ENCODE measurements at regions of chr1 and their contacts with region 1.

Region 1: GRCh38 chr1:157948312-157949073 is 45.0 kb upstream of the KIRREL1 start:
- DNase-seq: peak; percentile 43
- ATAC-seq: peak; percentile 96
- H3K4me3 ChIP-seq: no peak overlapping the region
- H3K27ac ChIP-seq: no peak overlapping the region
- H3K4me1 ChIP-seq: no peaks in the 10 kb centered on the region
- H3K27me3 ChIP-seq: peaks cover 48% of the 10 kb centered on the region
- CTCF ChIP-seq: peak; percentile 60 to 69 (median 67); a peak in 5 of 6 replicates
- POLR2A ChIP-seq: no peak
- RAD21 ChIP-seq: peak; percentile 86

Region 2: DNA sequence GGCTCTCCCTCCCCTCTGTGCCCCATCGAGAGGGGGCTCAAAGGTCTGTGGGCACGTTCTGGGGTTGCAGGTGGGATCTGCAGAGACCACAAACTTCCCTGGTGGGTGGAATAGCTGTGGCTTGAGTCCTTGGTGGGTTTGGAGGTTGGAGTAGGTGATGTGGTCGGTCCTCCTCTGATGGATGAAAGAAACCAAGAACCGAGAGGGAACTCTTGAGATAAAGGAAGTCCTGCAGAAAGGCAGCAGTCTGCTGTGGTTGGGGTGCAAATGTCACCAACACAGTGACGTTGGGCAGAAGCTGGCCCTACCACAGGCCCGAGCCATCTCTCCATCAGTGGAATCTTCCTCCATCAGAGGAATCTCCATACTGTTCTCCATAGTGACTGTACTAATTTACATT is 568.0 kb before region 1 on chr1:
- CTCF ChIA-PET with region 1: no interaction called
- POLR2A ChIA-PET with region 1: no interaction called
- RAD21 ChIA-PET with region 1: no interaction called
- intact Hi-C with region 1: loop called (anchors 2 kb)
- DNase-seq: no peak
- ATAC-seq: no peak
- H3K4me3 ChIP-seq: no peak overlapping the region
- H3K27ac ChIP-seq: no peak overlapping the region
- H3K4me1 ChIP-seq: peaks cover 0 to 8% of the 10 kb centered on the region in 2 experiments; a peak in 2 of 4 replicates
- H3K27me3 ChIP-seq: peaks cover 42% of the 10 kb centered on the region
- CTCF ChIP-seq: no peak
- POLR2A ChIP-seq: no peak
- RAD21 ChIP-seq: no peak

Region 3: DNA sequence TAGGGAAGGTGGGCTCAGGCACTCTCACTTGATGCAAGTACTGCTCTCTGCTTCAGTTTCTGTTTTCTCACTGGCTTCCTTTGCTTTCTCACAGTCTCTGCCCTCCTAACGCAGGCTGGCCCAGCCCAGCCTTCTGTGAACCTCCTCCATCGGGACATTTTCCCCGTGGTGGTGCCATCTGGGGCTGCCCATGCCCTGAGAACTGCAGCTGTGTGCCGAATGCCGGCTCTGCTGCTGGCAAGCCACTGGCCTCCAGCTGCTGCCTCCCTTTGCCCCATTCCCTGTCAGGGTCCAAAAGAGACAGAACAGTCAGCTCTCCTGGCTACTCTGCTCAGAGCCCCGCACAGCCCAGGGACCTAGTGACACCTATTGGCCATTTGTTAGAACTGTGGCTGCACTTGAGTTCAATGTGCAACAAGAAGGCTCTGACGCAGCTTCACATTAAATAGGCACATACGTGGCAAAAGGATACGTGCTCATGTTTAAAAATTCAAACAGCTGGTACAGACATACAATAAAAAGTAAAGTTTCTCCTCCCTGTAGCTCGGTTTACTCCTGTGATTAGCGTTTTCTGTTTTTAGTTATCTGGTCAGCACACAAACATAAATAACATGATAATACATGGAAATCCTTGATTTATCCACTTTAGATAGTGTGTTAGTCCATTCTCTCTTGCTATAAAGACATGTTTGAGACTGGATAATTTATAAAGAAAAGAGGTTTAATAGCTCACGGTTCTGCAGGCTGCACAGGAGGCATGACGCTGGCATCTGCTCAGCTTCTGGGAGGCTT is 442.8 kb before region 1 on chr1:
- CTCF ChIA-PET with region 1: no interaction called
- POLR2A ChIA-PET with region 1: no interaction called
- RAD21 ChIA-PET with region 1: no interaction called
- intact Hi-C with region 1: loop called (anchors 10 kb)
- DNase-seq: peak; percentile 39
- ATAC-seq: peak; percentile 98
- H3K4me3 ChIP-seq: no peak overlapping the region
- H3K27ac ChIP-seq: no peak overlapping the region
- H3K4me1 ChIP-seq: no peaks in the 10 kb centered on the region
- H3K27me3 ChIP-seq: peaks cover 6% of the 10 kb centered on the region
- CTCF ChIP-seq: peak; percentile 63 to 86 (median 75)
- POLR2A ChIP-seq: no peak
- RAD21 ChIP-seq: peak; percentile 70

Region 4: GRCh38 chr1:157580179-157580827 is 368.2 kb before region 1 on chr1:
- CTCF ChIA-PET with region 1: interaction called, 5 read pairs
- POLR2A ChIA-PET with region 1: no interaction called
- RAD21 ChIA-PET with region 1: no interaction called
- intact Hi-C with region 1: loop called (anchors 5 kb)
- DNase-seq: peak; percentile 71
- ATAC-seq: peak; percentile 82
- H3K4me3 ChIP-seq: no peak overlapping the region
- H3K27ac ChIP-seq: no peak overlapping the region
- H3K4me1 ChIP-seq: no peaks in the 10 kb centered on the region
- H3K27me3 ChIP-seq: peaks cover 29% of the 10 kb centered on the region
- CTCF ChIP-seq: peak; percentile 49 to 78 (median 61); a peak in 5 of 6 replicates
- POLR2A ChIP-seq: no peak
- RAD21 ChIP-seq: peak; percentile 59

Region 5: GRCh38 chr1:157773493-157774350 is 174.8 kb before region 1 on chr1:
- CTCF ChIA-PET with region 1: no interaction called
- POLR2A ChIA-PET with region 1: no interaction called
- RAD21 ChIA-PET with region 1: no interaction called
- intact Hi-C with region 1: loop called (anchors 5 kb)
- DNase-seq: no peak
- ATAC-seq: peak; percentile 90
- H3K4me3 ChIP-seq: no peak overlapping the region
- H3K27ac ChIP-seq: no peak overlapping the region
- H3K4me1 ChIP-seq: no peaks in the 10 kb centered on the region
- H3K27me3 ChIP-seq: peaks cover 28% of the 10 kb centered on the region
- CTCF ChIP-seq: peak in 2 of 3 experiments; percentile 57; a peak in 5 of 6 replicates
- POLR2A ChIP-seq: no peak
- RAD21 ChIP-seq: peak; percentile 48

Region 6: DNA sequence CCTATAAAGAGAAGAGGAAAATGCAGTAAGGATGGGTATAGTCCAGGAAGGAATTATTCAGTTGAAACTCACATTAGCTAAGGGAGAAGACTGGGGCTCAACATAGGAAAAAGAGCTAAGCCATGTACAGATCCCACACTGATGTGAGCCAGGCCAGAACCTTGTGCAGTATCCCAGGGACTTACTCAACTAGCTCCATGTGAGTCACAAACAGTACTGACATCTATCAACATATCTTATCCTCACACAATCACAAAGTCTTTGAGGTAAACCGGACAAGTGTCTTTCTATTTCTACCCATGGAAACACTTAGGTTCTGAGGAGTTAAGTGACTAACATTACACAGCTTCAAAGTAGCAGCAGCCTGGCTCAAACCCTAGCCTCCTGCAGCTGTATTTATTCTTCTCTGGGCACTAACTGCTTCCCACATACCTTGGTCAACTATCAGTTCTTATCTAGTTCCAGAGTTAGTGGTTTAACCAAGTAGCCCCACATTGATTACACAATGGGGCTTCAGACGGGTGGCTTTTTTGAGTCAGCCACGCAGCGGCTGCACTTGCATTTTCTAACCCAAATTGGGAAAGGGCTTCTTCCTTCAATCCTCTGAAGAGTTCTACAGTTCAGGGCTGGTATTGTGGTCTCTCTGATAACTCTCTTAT is 116.4 kb before region 1 on chr1:
- CTCF ChIA-PET with region 1: no interaction called
- POLR2A ChIA-PET with region 1: no interaction called
- RAD21 ChIA-PET with region 1: no interaction called
- intact Hi-C with region 1: no loop called
- DNase-seq: no peak
- ATAC-seq: no peak
- H3K4me3 ChIP-seq: no peak overlapping the region
- H3K27ac ChIP-seq: no peak overlapping the region
- H3K4me1 ChIP-seq: no peaks in the 10 kb centered on the region
- H3K27me3 ChIP-seq: peaks cover 65% of the 10 kb centered on the region
- CTCF ChIP-seq: no peak
- POLR2A ChIP-seq: no peak
- RAD21 ChIP-seq: no peak

Region 7: DNA sequence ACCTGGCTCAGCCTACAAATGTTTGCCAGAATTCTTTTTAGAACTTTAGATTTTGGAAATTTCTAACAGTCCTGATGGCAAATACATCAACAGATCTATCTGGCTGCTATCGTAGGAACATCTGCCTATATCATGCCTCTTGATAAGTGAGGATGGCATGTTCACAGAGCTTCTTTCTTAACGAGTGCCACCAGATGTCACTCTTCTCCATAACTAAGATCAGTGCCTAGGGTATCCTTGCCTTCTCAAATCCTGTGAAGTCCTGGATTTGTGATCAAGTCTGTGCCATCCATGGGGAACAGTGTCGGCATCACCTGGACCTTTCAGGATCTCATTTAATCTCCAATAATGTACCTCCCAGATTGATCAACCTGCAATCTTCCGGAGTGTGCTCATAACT is 70.4 kb before region 1 on chr1:
- CTCF ChIA-PET with region 1: interaction called, 16 read pairs
- POLR2A ChIA-PET with region 1: no interaction called
- RAD21 ChIA-PET with region 1: interaction called, 3 to 5 read pairs
- intact Hi-C with region 1: loop called (anchors 1 kb)
- DNase-seq: peak; percentile 46
- ATAC-seq: peak; percentile 94
- H3K4me3 ChIP-seq: no peak overlapping the region
- H3K27ac ChIP-seq: no peak overlapping the region
- H3K4me1 ChIP-seq: no peaks in the 10 kb centered on the region
- H3K27me3 ChIP-seq: peaks cover 40% of the 10 kb centered on the region
- CTCF ChIP-seq: peak; percentile 51 to 59 (median 55); a peak in 5 of 6 replicates
- POLR2A ChIP-seq: no peak
- RAD21 ChIP-seq: peak; percentile 62

Region 8: GRCh38 chr1:157969697-157970485 is 21.4 kb after region 1 on chr1:
- CTCF ChIA-PET with region 1: no interaction called
- POLR2A ChIA-PET with region 1: no interaction called
- RAD21 ChIA-PET with region 1: no interaction called
- intact Hi-C with region 1: no loop called
- DNase-seq: peak; percentile 41
- ATAC-seq: peak; percentile 93
- H3K4me3 ChIP-seq: no peak overlapping the region
- H3K27ac ChIP-seq: no peak overlapping the region
- H3K4me1 ChIP-seq: no peaks in the 10 kb centered on the region
- H3K27me3 ChIP-seq: no peaks in the 10 kb centered on the region
- CTCF ChIP-seq: peak; percentile 88 to 93 (median 89)
- POLR2A ChIP-seq: no peak
- RAD21 ChIP-seq: peak; percentile 80